PC-9 (cell line): ENCODE measurements at regions of chr9 and their contacts with region 1.

Region 1: DNA sequence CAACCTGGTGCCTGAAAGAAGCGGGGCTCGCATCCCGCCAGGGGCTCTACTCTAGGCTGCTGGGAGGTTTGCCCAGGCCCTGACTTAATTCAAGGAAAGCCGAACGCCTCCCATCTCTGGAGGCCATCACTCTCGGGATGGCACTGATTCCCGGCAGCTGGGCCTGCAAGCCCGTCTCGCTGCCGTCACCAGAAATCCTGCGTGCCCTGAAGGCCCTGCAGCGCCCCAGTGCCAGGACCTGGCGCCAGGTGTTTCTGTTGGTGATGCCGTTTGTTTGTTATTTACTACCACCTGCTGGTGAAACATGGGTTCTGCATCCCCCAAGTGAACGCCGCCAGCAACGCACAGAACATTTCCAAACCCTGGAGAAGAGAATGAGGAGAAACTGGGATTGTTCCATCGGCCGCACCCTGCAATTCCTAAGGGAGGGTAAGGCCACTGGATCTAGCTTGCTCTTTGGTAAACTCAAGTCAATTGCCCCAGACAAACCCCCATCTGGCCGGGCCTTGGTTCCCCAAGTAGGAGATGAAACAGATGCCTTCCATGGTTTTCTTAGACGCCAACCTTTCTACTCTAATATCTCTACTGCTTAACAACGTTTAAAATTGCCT is 77.9 kb downstream of the AK8 start:
- DNase-seq: peak; percentile 58 to 68
- H3K4me3 ChIP-seq: no peak overlapping the region
- H3K27ac ChIP-seq: no peak overlapping the region
- H3K4me1 ChIP-seq: no peaks in the 10 kb centered on the region
- H3K27me3 ChIP-seq: peaks cover 13% of the 10 kb centered on the region
- CTCF ChIP-seq: peak; percentile 92

Region 2: GRCh38 chr9:132507746-132508469 is 292.2 kb before region 1 on chr9:
- CTCF ChIA-PET with region 1: no interaction called
- POLR2A ChIA-PET with region 1: no interaction called
- intact Hi-C with region 1: loop called (anchors 1 kb)
- DNase-seq: peak in 1 of 2 experiments; percentile 67
- H3K4me3 ChIP-seq: no peak overlapping the region
- H3K27ac ChIP-seq: no peak overlapping the region
- H3K4me1 ChIP-seq: no peaks in the 10 kb centered on the region
- H3K27me3 ChIP-seq: peaks cover 85% of the 10 kb centered on the region
- CTCF ChIP-seq: peak; percentile 87

Region 3: DNA sequence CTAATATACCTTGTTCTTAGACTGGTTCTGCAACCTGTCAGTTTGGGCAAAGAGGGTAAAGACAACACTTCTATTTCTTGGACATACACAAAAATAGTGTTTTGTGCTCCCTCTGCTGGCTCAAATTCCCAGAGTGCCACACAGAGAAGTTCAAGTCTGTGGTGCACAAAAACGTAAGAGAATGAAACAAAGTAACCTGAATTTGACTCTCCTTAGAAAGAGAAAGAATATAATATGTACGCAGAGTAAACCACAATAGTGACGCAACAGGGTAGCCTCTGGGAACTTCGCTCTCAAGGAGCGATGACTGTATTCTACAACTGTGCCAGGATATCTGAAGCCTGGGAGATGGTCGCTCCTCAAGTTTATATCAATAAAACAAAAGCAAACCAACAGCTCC is 148.9 kb before region 1 on chr9:
- CTCF ChIA-PET with region 1: interaction called, 3 read pairs
- POLR2A ChIA-PET with region 1: no interaction called
- intact Hi-C with region 1: loop called (anchors 1 kb)
- DNase-seq: peak; percentile 45 to 71
- H3K4me3 ChIP-seq: no peak overlapping the region
- H3K27ac ChIP-seq: no peak overlapping the region
- H3K4me1 ChIP-seq: 0 out of 2 replicates have a peak, but pooled peaks cover 5% of the 10 kb centered on the region
- H3K27me3 ChIP-seq: no peaks in the 10 kb centered on the region
- CTCF ChIP-seq: peak; percentile 64; the same call in 1 of the 2 replicates

Region 4: DNA sequence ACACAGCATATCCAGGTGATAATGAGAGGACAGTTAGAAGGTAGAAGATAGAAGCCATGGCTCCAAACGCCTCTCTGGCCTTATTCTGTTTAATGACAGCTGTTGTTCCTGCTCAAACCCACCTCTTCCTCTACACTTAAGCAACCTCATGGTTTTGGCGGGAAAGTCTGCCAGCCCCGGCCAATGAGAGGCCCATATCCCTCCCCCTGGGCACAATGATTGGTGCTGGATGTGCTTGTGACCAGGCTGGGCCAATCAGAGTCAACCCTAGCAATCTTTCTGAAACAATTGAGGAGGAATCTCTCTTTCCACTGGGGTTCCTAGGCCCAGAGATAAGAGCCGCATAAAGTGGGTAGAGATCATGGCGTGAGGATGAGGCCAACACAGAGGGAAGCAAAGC is 173.6 kb after region 1 on chr9:
- CTCF ChIA-PET with region 1: no interaction called
- POLR2A ChIA-PET with region 1: no interaction called
- intact Hi-C with region 1: loop called (anchors 5 kb)
- DNase-seq: no peak
- H3K4me3 ChIP-seq: no peak overlapping the region
- H3K27ac ChIP-seq: no peak overlapping the region
- H3K4me1 ChIP-seq: no peaks in the 10 kb centered on the region
- H3K27me3 ChIP-seq: peaks cover 56% of the 10 kb centered on the region
- CTCF ChIP-seq: no peak